Left cardiac atrium (tissue), 4 donors: ENCODE measurements at regions of chr19 and their contacts with region 1.

Region 1: GRCh38 chr19:588093-588740 is 1.5 kb upstream of the HCN2 start:
- DNase-seq: peak; percentile 82
- ATAC-seq: peak; percentile 45 to 46

Region 2: GRCh38 chr19:633068-633785 is 45.0 kb after region 1 on chr19 and contains the start of gene POLRMT:
- intact Hi-C with region 1: loop called in 1 of 2 experiments (anchors 10 kb)
- DNase-seq: peak; percentile 99
- ATAC-seq: peak; percentile 98 to 99
- total RNA-seq, gene POLRMT: 33.7 to 43.6 TPM

Region 3: DNA sequence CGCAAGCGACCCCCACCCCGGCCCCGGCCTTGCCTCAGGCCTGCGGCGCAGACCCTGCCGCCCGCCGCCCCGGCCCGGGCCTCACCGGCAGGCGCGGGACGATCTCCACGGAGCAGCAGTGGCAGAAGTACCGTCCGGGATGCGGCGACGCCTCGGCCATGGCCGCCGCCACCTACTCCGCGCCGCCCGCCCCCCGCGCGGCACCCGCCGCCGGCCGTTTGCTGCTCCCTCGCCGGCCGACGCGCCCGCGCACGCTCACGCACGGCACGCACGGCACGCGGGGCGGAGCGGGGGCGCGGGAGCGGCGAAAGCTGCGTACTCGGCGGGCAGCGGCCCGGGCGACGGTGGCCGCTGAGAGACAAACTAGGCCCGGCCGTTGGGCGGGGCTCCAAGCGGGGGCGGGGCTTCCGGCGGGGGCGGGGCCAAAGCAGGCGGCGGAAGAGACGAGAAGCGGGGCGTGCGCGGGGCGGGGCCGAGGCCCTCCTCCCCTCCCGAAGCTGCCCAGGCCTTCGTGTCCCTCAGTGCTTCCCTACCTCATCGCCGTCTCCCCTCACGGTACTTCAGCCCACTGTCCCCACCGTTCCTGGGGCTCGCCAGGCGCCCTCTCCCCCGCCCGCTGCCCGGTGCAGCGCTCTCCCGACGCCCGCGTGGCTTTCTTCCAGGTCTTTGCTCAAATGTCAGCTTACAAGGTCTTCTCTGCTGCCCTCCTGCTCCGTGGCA is 74.9 kb after region 1 on chr19 and contains the start of gene RNF126:
- intact Hi-C with region 1: no loop called
- DNase-seq: peak; percentile 93
- ATAC-seq: peak; percentile 81 to 83
- total RNA-seq, gene RNF126: 19.2 to 35.9 TPM